Natural killer cell (primary cell): ENCODE measurements at regions of chr12 and their contacts with region 1.

Region 1: DNA sequence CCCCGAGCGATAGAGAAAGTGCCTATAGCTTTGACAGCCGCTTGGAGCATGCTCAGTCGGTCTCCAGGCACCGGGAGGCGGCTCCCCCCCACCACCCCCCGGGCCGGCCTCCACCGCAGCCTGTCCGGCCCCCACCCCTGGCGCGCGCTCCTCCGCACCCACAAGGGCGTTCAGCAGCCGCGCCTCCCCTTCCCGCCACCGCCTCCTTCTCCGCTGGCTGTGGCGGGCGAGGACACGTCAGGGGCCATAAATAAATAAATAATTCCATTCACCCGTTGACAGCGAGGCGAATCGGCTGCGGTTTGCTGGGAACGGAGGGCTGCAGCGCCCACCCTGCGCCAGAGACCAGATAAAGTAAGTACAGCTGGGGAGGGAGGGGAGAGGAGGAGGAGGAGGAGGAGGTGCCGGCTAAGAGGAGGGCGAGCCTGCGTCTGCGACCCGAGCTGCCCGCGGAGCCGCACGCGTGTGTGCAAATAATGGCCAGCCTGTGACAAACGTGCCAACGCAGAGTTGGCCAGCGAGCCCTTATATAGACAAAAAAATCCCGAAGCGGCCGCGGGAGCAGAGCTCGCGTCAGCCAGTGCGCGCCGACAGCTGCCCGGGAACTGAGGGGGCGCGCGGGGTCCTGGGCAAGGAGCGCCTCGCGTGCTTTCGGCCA is at the start of gene SLC16A7:
- DNase-seq: peak; percentile 80 to 91
- ATAC-seq: peak; percentile 52 to 77 (median 67)
- H3K4me3 ChIP-seq: peak within 1 kb of the TSS; percentile 93
- H3K4me3 Mint-ChIP-seq: peak within 1 kb of the TSS; percentile 96
- H3K27ac ChIP-seq: peak within 1 kb of the TSS; percentile 96
- H3K27ac Mint-ChIP-seq: peak within 1 kb of the TSS; percentile 93 to 99
- H3K4me1 ChIP-seq: peaks cover 8% of the 10 kb centered on the region
- H3K4me1 Mint-ChIP-seq: peaks cover 49 to 55% of the 10 kb centered on the region in 2 donors
- H3K27me3 ChIP-seq: no peaks in the 10 kb centered on the region
- H3K27me3 Mint-ChIP-seq: no peaks in the 10 kb centered on the region
- CTCF ChIP-seq: no peak
- total RNA-seq, gene SLC16A7: 42.4 to 46.9 (median 43.2) TPM

Region 2: DNA sequence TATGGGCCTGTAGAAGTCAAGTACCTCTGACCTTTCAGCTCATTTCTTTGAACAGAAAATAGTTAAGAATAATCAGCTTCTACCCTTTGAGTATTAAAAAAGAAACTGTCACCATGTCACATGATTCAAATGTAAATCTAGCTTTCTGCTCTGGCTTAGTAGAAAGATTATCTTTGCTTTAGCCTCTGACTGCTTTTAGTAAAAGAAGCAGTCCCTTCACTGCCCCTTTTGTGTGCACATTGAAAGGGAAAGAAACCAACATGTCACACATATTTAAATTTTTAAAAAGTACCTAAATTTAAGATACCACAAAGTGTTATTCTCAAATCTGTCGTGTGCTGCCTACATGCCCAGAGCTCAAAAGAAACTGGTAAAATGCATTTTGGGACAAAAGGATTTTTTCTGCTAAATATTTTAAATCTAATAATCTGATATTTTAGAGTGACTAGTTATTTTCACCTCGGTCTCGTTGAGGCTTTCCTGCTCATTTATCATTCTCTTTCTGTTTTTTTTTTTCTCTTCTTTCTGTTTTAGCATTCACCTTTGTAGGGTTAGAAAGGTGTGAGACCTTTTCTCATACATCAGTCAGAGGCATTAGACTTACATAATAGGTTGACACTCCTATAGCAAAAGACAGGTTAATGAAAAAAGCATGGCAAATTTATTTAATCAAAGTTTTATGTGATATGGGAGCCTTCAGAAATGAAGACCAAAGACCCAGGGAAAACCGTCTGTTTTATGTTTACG is 41.1 kb after region 1 on chr12:
- intact Hi-C with region 1: loop called (anchors 2 kb)
- DNase-seq: no peak
- ATAC-seq: peak; percentile 37 to 73 (median 52)
- H3K4me3 ChIP-seq: no peak overlapping the region
- H3K4me3 Mint-ChIP-seq: no peak overlapping the region
- H3K27ac ChIP-seq: no peak overlapping the region
- H3K27ac Mint-ChIP-seq: peak overlapping the region; percentile 21 to 85
- H3K4me1 ChIP-seq: peaks cover 2% of the 10 kb centered on the region
- H3K4me1 Mint-ChIP-seq: peaks cover 49 to 55% of the 10 kb centered on the region in 2 donors
- H3K27me3 ChIP-seq: no peaks in the 10 kb centered on the region
- H3K27me3 Mint-ChIP-seq: no peaks in the 10 kb centered on the region
- CTCF ChIP-seq: no peak

Region 3: GRCh38 chr12:59716043-59716442 is 120.0 kb after region 1 on chr12:
- intact Hi-C with region 1: no loop called
- DNase-seq: no peak
- ATAC-seq: no peak
- H3K4me3 ChIP-seq: no peak overlapping the region
- H3K4me3 Mint-ChIP-seq: no peak overlapping the region
- H3K27ac ChIP-seq: no peak overlapping the region
- H3K27ac Mint-ChIP-seq: no peak overlapping the region
- H3K4me1 ChIP-seq: no peaks in the 10 kb centered on the region
- H3K4me1 Mint-ChIP-seq: peaks cover 26 to 34% of the 10 kb centered on the region in 2 donors
- H3K27me3 ChIP-seq: no peaks in the 10 kb centered on the region
- H3K27me3 Mint-ChIP-seq: no peaks in the 10 kb centered on the region
- CTCF ChIP-seq: no peak

Region 4: DNA sequence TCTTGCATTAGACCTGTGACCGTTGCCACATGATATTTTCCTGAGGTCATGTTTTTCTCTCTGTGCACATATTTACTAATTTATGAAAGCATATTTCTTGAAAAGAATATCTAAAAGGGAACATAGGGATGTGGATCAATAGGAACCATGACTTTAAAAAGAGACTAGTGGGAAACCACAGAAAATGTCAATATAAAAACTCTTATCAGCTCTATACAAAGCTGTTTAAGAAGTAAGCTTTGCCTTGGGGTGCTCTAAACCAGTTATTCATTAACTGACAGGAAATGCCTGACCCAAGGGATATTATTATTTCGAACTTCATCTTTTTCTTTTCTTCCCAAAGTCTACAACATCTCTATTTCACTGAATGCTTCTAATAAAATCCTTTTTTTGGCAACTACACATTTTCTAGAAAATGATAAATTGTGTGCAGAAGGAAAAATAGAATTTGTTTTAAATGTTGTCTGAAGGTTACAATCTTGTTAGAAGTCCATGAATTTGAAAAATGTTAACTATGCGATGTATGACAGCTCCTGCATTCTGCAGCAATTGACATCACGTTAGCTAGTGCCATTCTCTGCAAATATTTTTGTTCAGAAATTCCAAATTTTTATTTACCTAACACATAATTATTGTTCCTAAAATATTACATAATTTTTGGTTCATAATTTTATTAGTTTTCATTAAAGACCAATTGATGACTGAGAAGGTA is 344.8 kb after region 1 on chr12:
- intact Hi-C with region 1: no loop called
- DNase-seq: no peak
- ATAC-seq: no peak
- H3K4me3 ChIP-seq: no peak overlapping the region
- H3K4me3 Mint-ChIP-seq: no peak overlapping the region
- H3K27ac ChIP-seq: no peak overlapping the region
- H3K27ac Mint-ChIP-seq: no peak overlapping the region
- H3K4me1 ChIP-seq: no peaks in the 10 kb centered on the region
- H3K4me1 Mint-ChIP-seq: no peaks in the 10 kb centered on the region
- H3K27me3 ChIP-seq: no peaks in the 10 kb centered on the region
- H3K27me3 Mint-ChIP-seq: no peaks in the 10 kb centered on the region
- CTCF ChIP-seq: no peak